ENCODE measurements at regions of chr1 and their contacts with region 1.

Region 1: GRCh38 chr1:201154389-201155165 is at the start of gene TMEM9:
- DNase-seq: peak; percentile 99
- H3K4me3 Mint-ChIP-seq: peak within 1 kb of the TSS; percentile 82
- H3K27ac Mint-ChIP-seq: peak within 1 kb of the TSS; percentile 14
- H3K4me1 Mint-ChIP-seq: peaks cover 5% of the 10 kb centered on the region
- H3K27me3 Mint-ChIP-seq: peaks cover 12% of the 10 kb centered on the region
- CTCF ChIP-seq: no peak
- total RNA-seq, gene TMEM9: 67.2 and 71.7 TPM in 2 replicates

Region 2: DNA sequence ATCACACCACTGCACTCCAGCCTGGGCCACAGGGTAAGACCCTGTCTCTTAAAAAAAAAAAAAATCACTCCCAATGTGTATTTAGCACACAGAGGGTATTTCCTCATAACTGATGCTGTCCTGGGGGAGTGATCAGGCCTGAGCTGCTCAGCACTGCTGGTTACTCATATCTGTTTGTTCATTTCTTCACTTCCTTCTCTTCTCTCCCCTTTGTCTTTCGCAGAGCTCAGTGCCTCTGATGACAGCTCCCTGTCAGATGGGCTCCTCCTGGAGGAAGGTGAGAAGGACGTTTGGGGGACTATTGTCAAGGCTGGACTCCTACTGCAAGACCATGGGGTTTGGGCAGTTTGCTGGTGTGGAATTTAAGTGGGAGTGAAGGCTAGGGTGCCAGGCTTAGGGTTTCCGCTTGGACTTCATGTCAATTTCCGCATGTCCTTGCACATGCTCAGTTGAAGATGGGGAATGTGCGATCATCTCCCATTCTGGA is 246.9 kb before region 1 on chr1:
- CTCF ChIA-PET with region 1: no interaction called
- POLR2A ChIA-PET with region 1: no interaction called
- intact Hi-C with region 1: no loop called
- DNase-seq: peak; percentile 61
- H3K4me3 Mint-ChIP-seq: no peak overlapping the region
- H3K27ac Mint-ChIP-seq: no peak overlapping the region
- H3K4me1 Mint-ChIP-seq: peaks cover 32% of the 10 kb centered on the region
- H3K27me3 Mint-ChIP-seq: no peaks in the 10 kb centered on the region
- CTCF ChIP-seq: no peak

Region 3: GRCh38 chr1:201069636-201070035 is 84.9 kb before region 1 on chr1:
- CTCF ChIA-PET with region 1: no interaction called
- POLR2A ChIA-PET with region 1: no interaction called
- intact Hi-C with region 1: no loop called
- DNase-seq: peak; percentile 26
- H3K4me3 Mint-ChIP-seq: no peak overlapping the region
- H3K27ac Mint-ChIP-seq: no peak overlapping the region
- H3K4me1 Mint-ChIP-seq: peaks cover 7% of the 10 kb centered on the region
- H3K27me3 Mint-ChIP-seq: peaks cover 49% of the 10 kb centered on the region
- CTCF ChIP-seq: no peak

Region 4: GRCh38 chr1:201176940-201177339 is 22.4 kb after region 1 on chr1:
- CTCF ChIA-PET with region 1: interaction called, 109 read pairs
- POLR2A ChIA-PET with region 1: interaction called, 40 read pairs
- intact Hi-C with region 1: no loop called
- DNase-seq: peak; percentile 51
- H3K4me3 Mint-ChIP-seq: no peak overlapping the region
- H3K27ac Mint-ChIP-seq: peak overlapping the region; percentile 20
- H3K4me1 Mint-ChIP-seq: peaks cover 14% of the 10 kb centered on the region
- H3K27me3 Mint-ChIP-seq: peaks cover 15% of the 10 kb centered on the region
- CTCF ChIP-seq: no peak